Activated CD4-positive, alpha-beta T cell treated with anti-CD3 and anti-CD28 coated beads, Interleukin-2, amount 10 ng/mL, durations not matched to agents 7 days and 5 days (primary cell): ENCODE measurements at regions of chr1 and their contacts with region 1.

Region 1: DNA sequence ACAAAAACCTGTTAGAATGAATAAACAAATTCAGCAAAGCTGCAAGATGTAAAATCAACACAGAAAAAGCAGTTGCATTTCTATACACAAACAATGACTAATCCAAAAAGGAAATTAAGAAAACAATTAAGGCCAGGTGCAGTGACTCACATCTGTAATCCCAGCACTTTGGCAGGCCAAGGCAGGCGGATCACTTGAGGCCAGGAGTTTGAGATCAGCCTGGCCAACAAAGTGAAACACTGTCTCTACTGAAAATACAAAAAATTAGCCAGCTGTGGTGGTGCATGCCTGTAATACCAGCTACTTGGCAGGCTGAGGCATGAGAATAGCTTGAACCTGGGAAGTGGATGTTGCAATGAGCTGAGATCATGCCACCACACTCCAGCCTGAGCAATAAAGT is 22.3 kb downstream of the THEM4 start:
- DNase-seq: no peak
- H3K4me3 Mint-ChIP-seq: no peak overlapping the region
- H3K27ac Mint-ChIP-seq: no peak overlapping the region
- H3K4me1 Mint-ChIP-seq: peaks cover 19% of the 10 kb centered on the region
- H3K27me3 Mint-ChIP-seq: no peaks in the 10 kb centered on the region

Region 2: GRCh38 chr1:151898513-151898991 is 11.5 kb after region 1 on chr1:
- CTCF ChIA-PET with region 1: interaction called, 12 read pairs
- POLR2A ChIA-PET with region 1: no interaction called
- DNase-seq: peak; percentile 78
- H3K4me3 Mint-ChIP-seq: peak overlapping the region; percentile 51
- H3K27ac Mint-ChIP-seq: peak overlapping the region; percentile 88
- H3K4me1 Mint-ChIP-seq: peaks cover 63% of the 10 kb centered on the region
- H3K27me3 Mint-ChIP-seq: no peaks in the 10 kb centered on the region

Region 3: DNA sequence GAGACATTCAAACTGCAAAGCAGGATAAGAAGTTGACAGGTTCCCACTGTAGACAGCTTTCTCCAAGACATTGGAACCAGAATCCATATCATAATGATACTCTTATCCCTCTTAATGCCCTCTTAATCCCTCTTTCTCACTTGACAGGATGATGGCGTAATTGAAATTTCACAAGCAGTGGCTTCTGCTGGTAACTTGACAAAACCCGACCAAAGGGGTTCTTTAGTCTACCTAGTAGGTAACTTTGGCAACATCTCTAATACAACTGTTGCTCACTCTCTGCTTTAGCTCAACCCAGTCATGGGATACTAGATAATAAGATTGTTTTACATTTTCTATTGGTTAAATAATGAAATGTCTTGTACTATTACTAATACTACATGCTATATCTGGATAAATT is 71.9 kb after region 1 on chr1:
- CTCF ChIA-PET with region 1: no interaction called
- POLR2A ChIA-PET with region 1: no interaction called
- DNase-seq: no peak
- H3K4me3 Mint-ChIP-seq: no peak overlapping the region
- H3K27ac Mint-ChIP-seq: no peak overlapping the region
- H3K4me1 Mint-ChIP-seq: peaks cover 7% of the 10 kb centered on the region
- H3K27me3 Mint-ChIP-seq: peaks cover 16% of the 10 kb centered on the region